GM10248 (cell line): ENCODE measurements at regions of chr4 and their contacts with region 1.

Region 1: GRCh38 chr4:24568425-24568824 is 15.9 kb downstream of the DHX15 start:
- DNase-seq: no peak
- CTCF ChIP-seq: no peak

Region 2: GRCh38 chr4:24428850-24429249 is 139.6 kb before region 1 on chr4:
- CTCF ChIA-PET with region 1: no interaction called
- POLR2A ChIA-PET with region 1: no interaction called
- DNase-seq: no peak
- CTCF ChIP-seq: no peak

Region 3: GRCh38 chr4:24529555-24529954 is 38.9 kb before region 1 on chr4:
- CTCF ChIA-PET with region 1: no interaction called
- POLR2A ChIA-PET with region 1: no interaction called
- DNase-seq: no peak
- CTCF ChIP-seq: no peak

Region 4: DNA sequence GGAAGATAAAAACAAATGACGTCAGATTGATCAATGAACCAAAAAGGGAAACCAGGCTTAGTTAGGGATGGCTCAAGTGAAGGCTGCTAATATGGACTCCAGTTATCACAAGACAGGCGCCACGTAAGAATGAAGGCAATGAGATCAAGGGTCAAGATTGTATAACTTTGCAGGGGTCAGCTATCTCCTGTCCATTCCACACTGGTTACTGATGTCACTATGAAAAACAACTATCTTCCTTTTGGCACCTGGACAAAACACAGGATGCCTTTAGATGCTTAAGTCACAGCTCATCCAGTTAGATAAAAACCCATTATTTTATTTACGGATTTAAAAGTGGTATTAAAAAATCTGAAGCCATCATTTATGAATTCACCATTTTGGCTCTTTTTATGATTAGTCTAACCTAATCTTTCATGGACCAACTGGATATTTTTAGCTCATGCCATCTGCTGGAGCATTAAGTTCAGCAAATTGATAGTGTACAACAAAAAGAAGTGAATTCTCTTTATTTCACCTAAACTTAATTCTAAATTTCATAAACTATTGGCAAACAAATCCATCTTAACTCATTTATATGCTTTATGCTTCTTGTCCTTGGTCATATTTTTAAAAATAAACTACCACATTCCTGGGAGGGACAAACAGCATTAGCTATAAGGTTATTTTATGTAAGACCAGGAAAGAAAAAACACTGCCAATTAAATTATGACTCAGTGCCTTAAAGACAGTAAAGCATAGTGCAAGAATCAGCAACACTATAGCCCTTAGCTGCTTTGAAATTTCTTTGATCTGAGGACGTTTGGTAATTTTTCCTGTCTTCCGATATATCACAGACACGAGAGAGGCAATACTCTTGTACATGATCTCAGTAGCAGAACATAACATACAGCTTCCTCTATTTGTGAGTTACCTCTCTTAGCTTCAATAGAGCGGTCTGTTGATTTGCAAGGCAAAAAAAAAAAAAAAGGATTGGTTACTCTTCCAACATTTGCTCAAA is 11.1 kb before region 1 on chr4:
- CTCF ChIA-PET with region 1: interaction called, 28 read pairs
- POLR2A ChIA-PET with region 1: no interaction called
- DNase-seq: no peak
- CTCF ChIP-seq: no peak

Region 5: GRCh38 chr4:24594891-24595290 is 26.5 kb after region 1 on chr4:
- CTCF ChIA-PET with region 1: no interaction called
- POLR2A ChIA-PET with region 1: no interaction called
- DNase-seq: no peak
- CTCF ChIP-seq: no peak